Posterior cingulate gyrus (tissue), 11 donors: ENCODE measurements at regions of chrX and their contacts with region 1.

Region 1: GRCh38 chrX:135003876-135004623 is 13.3 kb downstream of the SMIM10 start:
- DNase-seq: peak; percentile 82 to 98 (median 88)

Region 2: GRCh38 chrX:134969726-134970125 is 34.3 kb before region 1 on chrX:
- intact Hi-C with region 1: loop called (anchors 2 kb)
- DNase-seq: no peak

Region 3: GRCh38 chrX:135050603-135051002 is 46.6 kb after region 1 on chrX:
- intact Hi-C with region 1: loop called (anchors 5 kb)
- DNase-seq: no peak

Region 4: DNA sequence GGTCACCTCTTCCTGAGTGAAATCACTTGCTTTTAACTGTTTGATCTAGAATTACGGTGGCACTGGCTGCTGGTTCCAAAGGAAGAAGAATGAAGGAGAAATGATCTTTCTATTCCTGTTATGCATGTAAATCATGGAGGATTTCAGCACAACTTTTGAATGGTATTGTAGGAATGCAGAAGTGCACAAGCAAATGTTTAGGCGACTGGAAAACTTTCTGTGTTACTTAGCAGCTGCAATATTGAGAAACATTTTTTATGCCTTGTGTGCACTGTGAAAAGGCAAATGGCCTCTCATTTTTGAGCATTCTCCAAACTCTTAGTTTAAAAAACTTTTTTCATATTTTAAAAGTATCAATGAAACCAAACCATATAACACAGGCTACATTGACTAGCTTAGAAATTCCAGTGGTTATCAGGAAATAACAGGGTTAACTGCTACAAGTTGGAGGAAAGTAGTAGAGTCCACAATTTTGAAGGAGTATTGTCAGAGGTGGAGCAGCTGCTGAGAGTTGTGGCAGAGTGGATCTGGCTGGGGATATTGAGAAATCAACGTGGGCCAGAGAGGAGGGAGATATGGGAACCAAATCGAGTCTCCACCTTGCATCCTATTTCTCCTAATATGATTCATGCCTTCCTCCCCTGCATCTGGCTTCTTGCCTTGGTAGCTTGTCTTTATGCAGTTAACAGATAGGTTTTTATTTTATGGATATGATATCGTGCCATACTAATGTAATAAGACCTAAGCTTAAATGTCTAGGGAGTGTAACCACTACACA is 1111.3 kb after region 1 on chrX:
- intact Hi-C with region 1: no loop called
- DNase-seq: no peak